ENCODE measurements at regions of chr2 and their contacts with region 1.

Region 1: GRCh38 chr2:241102239-241102803 is at the start of gene MTERF4:
- DNase-seq: peak; percentile 79 to 90 (median 85)
- ATAC-seq: peak; percentile 91 to 94
- H3K4me3 Mint-ChIP-seq: peak within 1 kb of the TSS; percentile 94 to 99 (median 97)
- H3K27ac Mint-ChIP-seq: peak within 1 kb of the TSS; percentile 92 to 99 (median 98)
- H3K4me1 Mint-ChIP-seq: peaks cover 20 to 75% (median 69%) of the 10 kb centered on the region in 4 donors
- H3K27me3 Mint-ChIP-seq: no peaks in the 10 kb centered on the region
- polyA plus RNA-seq, gene MTERF4: 46.4 to 82.1 (median 57.8) TPM

Region 2: DNA sequence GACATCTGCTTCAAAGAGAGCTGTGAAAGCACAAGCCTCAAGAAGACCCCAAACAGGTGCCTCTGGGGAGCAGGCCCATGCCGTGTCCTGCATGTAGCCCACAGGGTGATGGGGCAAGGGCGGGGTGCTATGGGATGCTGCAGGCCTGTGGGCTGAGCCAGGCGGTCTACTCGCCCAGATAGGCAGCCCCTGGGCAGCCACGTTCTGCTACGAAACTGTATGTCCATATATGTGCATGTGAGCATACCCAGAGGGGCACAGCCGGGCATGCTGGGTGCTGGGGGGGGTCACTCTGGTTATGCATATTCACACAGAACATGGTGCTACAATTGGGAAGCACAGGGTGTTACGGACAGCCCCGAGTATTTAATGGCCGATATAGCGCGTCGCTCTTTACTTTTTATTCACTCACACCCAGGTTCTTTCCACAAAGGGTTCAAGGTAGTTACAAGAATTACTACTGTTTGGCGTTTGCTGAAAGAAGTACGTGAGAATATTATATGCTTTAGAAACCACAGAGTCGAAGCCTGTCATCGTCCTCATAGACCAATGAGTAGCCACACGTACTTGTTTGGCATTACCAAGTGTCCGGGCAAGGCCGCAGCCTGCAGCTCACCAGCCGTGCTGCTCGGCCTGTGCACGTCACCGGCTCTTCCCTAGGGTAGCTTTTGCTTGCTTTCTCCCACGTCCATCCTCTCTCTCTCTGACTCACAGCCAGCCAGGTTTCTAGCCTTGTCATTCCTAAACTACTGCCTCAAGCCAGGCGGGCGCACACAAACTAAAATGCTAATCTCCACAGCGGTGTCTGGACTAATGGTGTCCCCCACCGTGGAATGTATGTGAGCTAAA is 14.7 kb before region 1 on chr2:
- POLR2A ChIA-PET with region 1: interaction called, 473 read pairs
- DNase-seq: no peak
- ATAC-seq: no peak
- H3K4me3 Mint-ChIP-seq: peak overlapping the region in 3 of 10 donors; percentile 24 to 80 (median 64)
- H3K27ac Mint-ChIP-seq: peak overlapping the region; percentile 21 to 91 (median 81)
- H3K4me1 Mint-ChIP-seq: peaks cover 17 to 48% (median 27%) of the 10 kb centered on the region in 4 donors
- H3K27me3 Mint-ChIP-seq: no peaks in the 10 kb centered on the region